Adrenal gland (tissue), 19 donors: ENCODE measurements at regions of chr15 and their contacts with region 1.

Region 1: GRCh38 chr15:100663086-100663914 is 60.9 kb downstream of the ASB7 start:
- DNase-seq: peak in 1 of 7 donors; percentile 35
- H3K4me3 ChIP-seq: no peak overlapping the region
- H3K27ac ChIP-seq: no peak overlapping the region
- H3K4me1 ChIP-seq: no peaks in the 10 kb centered on the region
- H3K27me3 ChIP-seq: no peaks in the 10 kb centered on the region
- CTCF ChIP-seq: no peak
- POLR2A ChIP-seq: no peak

Region 2: DNA sequence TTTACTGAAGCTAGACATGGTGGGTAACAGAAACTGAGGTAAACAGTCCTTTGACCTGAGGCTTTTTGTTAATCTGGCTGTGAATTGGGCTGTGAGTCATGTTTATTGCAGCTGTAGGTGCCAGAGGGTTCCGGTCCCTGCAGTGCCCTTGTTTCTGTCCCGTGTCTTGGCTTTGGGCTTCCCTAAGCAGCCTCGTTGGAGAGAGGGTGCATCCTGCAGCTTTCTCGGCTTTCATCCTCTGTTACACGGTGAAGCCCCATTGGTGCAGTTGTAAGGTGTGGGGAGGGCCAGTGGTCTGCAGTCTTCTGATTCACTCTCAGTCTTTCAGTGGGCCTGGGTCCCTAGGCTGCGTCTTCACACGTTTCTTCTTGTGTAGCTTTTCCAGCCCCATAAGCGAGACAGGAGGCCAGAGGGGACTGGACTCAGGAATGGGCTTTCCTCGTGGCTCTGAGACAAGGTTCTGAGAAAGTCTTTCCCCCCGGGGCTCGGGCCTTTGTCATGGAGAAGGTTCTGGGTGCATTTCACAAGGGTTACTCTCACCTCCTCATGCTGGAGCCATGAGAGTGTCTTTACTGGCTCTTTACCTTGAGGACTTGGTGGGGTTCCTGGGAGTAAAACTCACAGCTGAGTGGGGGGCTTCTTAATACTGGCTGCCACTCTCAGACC is 27.8 kb before region 1 on chr15:
- intact Hi-C with region 1: no loop called
- DNase-seq: no peak
- H3K4me3 ChIP-seq: no peak overlapping the region
- H3K27ac ChIP-seq: no peak overlapping the region
- H3K4me1 ChIP-seq: no peaks in the 10 kb centered on the region
- H3K27me3 ChIP-seq: no peaks in the 10 kb centered on the region
- CTCF ChIP-seq: no peak
- POLR2A ChIP-seq: no peak

Region 3: GRCh38 chr15:100740138-100740537 is 76.8 kb after region 1 on chr15:
- intact Hi-C with region 1: loop called in 1 of 2 experiments (anchors 10 kb)
- DNase-seq: no peak
- H3K4me3 ChIP-seq: no peak overlapping the region
- H3K27ac ChIP-seq: no peak overlapping the region
- H3K4me1 ChIP-seq: no peaks in the 10 kb centered on the region
- H3K27me3 ChIP-seq: peaks cover 4% of the 10 kb centered on the region
- CTCF ChIP-seq: no peak
- POLR2A ChIP-seq: no peak